ENCODE measurements at regions of chr12 and their contacts with region 1.

Region 1: DNA sequence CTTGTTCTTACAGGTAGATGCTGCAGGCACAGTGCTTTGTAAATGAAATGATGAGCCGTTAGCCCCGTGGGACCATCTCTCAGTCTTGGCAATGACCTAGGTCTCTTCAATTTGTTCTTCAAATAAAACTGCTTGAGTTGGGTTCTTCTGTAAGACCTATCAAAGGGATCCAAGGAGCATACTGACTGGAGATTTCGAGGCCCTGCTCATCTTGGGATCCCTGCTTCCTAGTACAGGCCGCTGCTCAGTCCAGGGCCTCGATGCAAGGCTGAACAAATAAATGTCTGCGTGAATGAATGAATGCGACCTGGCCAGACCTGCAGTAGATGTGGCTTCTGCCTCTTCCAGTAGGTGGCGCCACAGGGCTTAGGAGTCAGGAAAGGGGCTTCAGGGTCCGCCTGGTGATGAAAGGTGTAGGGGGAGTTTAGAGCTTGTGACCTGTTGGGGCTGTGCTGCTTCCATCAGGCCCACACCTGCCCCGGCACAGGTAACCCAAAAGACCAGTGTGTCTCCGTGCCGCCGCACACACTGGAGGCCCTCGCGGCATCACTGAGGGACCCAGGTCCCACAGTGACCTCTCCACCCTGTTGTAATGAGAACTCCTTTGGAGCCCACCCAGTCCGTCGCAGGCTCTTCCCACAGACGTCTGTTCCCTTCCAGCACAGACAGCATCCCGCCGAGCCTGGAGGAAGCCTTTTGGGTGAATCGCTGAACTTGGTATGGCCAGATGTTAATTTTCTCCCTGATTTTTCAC is 4.4 kb downstream of the CACNA1C start:
- DNase-seq: peak; percentile 69
- H3K4me3 Mint-ChIP-seq: no peak overlapping the region
- H3K27ac Mint-ChIP-seq: no peak overlapping the region
- H3K4me1 Mint-ChIP-seq: peaks cover 12% of the 10 kb centered on the region
- H3K27me3 Mint-ChIP-seq: peaks cover 78% of the 10 kb centered on the region

Region 2: GRCh38 chr12:1851151-1851701 is 206.0 kb before region 1 on chr12:
- CTCF ChIA-PET with region 1: no interaction called
- DNase-seq: no peak
- H3K4me3 Mint-ChIP-seq: no peak overlapping the region
- H3K27ac Mint-ChIP-seq: no peak overlapping the region
- H3K4me1 Mint-ChIP-seq: peaks cover 5% of the 10 kb centered on the region
- H3K27me3 Mint-ChIP-seq: no peaks in the 10 kb centered on the region

Region 3: DNA sequence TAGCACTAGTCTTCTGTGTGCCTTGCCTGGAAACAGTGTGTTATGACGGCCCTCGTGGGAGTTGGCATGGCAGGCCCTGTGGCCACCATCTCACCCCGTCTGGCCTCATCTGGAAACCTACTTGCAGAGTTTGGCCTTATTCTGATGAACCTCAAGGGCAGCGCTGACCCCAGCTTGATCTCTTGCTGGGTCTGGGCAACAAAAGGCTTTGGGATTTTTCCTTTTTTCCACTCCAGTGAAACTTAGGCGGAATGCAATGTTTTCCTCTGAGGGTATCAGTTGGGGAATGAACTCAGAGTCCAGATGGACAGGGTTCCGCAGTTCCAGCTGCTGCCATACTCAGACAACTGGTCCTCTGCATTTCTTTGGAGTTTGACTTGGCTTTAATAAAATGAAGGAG is 11.4 kb after region 1 on chr12:
- CTCF ChIA-PET with region 1: no interaction called
- DNase-seq: no peak
- H3K4me3 Mint-ChIP-seq: no peak overlapping the region
- H3K27ac Mint-ChIP-seq: no peak overlapping the region
- H3K4me1 Mint-ChIP-seq: peaks cover 13% of the 10 kb centered on the region
- H3K27me3 Mint-ChIP-seq: peaks cover 33% of the 10 kb centered on the region

Region 4: GRCh38 chr12:2291182-2291832 is 234.1 kb after region 1 on chr12:
- CTCF ChIA-PET with region 1: interaction called, 11 read pairs
- DNase-seq: peak; percentile 43
- H3K4me3 Mint-ChIP-seq: no peak overlapping the region
- H3K27ac Mint-ChIP-seq: no peak overlapping the region
- H3K4me1 Mint-ChIP-seq: peaks cover 3% of the 10 kb centered on the region
- H3K27me3 Mint-ChIP-seq: peaks cover 20% of the 10 kb centered on the region

Measured in activated naive CD4-positive, alpha-beta T cell treated with anti-CD3 and anti-CD28 coated beads, Interleukin-2, amount 10 ng/mL, durations not matched to agents 7 days and 5 days (primary cell).